ENCODE measurements at regions of chr5 and their contacts with region 1.

Region 1: GRCh38 chr5:140221697-140222223 is 46.8 kb downstream of the CYSTM1 start:
- DNase-seq: peak; percentile 60 to 86
- ATAC-seq: peak; percentile 75 to 83 (median 79)
- H3K4me3 ChIP-seq: peak overlapping the region; percentile 28
- H3K27ac ChIP-seq: peak overlapping the region; percentile 94
- H3K4me1 ChIP-seq: peaks cover 89% of the 10 kb centered on the region
- H3K27me3 ChIP-seq: no peaks in the 10 kb centered on the region
- CTCF ChIP-seq: no peak

Region 2: GRCh38 chr5:140174465-140175366 is 47.0 kb before region 1 on chr5 and contains the start of gene CYSTM1:
- intact Hi-C with region 1: loop called in 1 of 2 experiments (anchors 1 kb)
- DNase-seq: peak; percentile 97 to 98
- ATAC-seq: peak; percentile 86 to 90 (median 88)
- H3K4me3 ChIP-seq: peak within 1 kb of the TSS; percentile 95
- H3K27ac ChIP-seq: peak within 1 kb of the TSS; percentile 100
- H3K4me1 ChIP-seq: peaks cover 36% of the 10 kb centered on the region
- H3K27me3 ChIP-seq: no peaks in the 10 kb centered on the region
- CTCF ChIP-seq: no peak
- total RNA-seq, gene CYSTM1: 193 to 408 (median 285) TPM

Region 3: DNA sequence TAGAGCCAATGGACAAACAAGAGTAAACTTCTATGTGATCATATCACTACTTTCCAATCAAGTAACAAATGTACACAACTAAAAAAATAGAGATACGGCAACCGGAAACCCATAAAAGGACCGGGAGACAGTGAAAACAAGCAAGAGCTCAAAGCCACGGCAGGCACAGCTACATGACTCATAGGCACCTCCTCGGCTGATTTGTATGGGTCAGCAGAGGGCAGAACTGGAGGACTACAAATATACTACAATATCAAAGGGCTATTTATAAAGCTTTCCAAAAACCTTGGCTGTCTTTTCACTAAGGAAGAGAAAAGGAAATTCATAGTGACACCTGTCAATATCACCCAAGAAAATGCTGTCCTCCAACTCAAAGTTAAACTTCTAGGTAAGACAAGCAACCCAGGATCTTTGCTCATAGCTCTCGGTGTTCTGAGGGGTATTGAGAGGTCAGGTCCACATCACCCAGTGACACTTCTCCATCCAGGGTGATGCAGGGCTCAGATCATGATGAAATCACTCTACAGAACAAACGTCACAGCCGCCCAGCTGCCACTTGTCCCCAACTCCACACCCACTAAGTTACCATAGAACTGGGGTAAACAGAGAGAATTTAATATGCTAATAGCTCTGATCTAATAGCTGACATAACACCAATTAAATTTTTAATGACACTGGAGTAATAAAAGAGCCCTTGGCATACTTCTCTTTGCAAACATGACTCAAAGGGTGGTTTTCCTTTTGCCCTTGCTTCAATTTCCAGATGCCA is 39.8 kb after region 1 on chr5:
- intact Hi-C with region 1: loop called in 1 of 2 experiments (anchors 1 kb)
- DNase-seq: peak; percentile 60 to 82
- ATAC-seq: peak; percentile 93 to 97 (median 94)
- H3K4me3 ChIP-seq: peak overlapping the region; percentile 35
- H3K27ac ChIP-seq: peak overlapping the region; percentile 92
- H3K4me1 ChIP-seq: peaks cover 40% of the 10 kb centered on the region
- H3K27me3 ChIP-seq: no peaks in the 10 kb centered on the region
- CTCF ChIP-seq: no peak